Lower leg skin (tissue), 4 donors: ENCODE measurements at regions of chr16 and their contacts with region 1.

Region 1: GRCh38 chr16:89210904-89211515 is 6.5 kb upstream of the ZNF778 start:
- DNase-seq: no peak
- H3K4me3 ChIP-seq: no peak overlapping the region
- CTCF ChIP-seq: no peak
- POLR2A ChIP-seq: no peak

Region 2: GRCh38 chr16:88569985-88570690 is 640.9 kb before region 1 on chr16 and contains the start of gene ZC3H18:
- intact Hi-C with region 1: no loop called
- DNase-seq: peak; percentile 92 to 99
- H3K4me3 ChIP-seq: peak within 1 kb of the TSS; percentile 61
- CTCF ChIP-seq: no peak
- POLR2A ChIP-seq: no peak
- total RNA-seq, gene ZC3H18: 16.5 to 32.3 (median 18.5) TPM

Region 3: DNA sequence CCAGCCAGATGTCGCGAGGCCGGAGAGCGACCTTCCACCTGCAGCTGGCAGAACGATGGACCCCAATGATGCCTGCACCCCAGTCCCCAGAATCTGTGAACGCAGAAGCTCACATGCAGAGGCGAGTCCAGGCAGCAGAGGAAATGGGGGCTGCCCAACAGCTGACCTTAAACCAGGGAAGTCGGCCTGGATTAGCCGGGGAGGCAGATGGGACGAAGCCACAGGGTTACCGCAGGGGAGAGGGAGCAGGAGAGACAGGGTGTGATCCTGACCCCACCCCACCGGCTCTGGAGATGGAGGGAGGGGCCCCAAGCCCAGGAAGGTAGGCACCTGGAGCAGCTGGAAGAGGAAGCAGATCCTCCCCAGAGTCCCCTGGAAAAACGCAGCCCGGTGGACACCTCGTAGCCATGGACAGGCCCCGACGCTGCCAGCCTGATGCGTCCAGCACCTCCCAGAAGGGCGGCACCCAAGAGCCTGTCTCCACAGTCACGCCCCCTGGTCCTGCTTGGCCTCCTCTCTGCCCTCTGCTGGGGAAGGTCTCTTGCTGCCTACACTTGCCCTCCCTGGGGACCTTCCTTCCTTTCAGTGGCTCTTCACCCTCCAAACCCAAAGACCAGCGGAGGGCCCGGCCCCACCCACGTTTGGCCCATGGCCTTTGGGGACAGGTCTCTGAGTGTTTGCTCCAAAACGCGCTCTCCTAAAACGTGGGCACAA is 463.3 kb before region 1 on chr16:
- intact Hi-C with region 1: loop called (anchors 5 kb)
- DNase-seq: no peak
- H3K4me3 ChIP-seq: no peak overlapping the region
- CTCF ChIP-seq: no peak
- POLR2A ChIP-seq: no peak

Region 4: DNA sequence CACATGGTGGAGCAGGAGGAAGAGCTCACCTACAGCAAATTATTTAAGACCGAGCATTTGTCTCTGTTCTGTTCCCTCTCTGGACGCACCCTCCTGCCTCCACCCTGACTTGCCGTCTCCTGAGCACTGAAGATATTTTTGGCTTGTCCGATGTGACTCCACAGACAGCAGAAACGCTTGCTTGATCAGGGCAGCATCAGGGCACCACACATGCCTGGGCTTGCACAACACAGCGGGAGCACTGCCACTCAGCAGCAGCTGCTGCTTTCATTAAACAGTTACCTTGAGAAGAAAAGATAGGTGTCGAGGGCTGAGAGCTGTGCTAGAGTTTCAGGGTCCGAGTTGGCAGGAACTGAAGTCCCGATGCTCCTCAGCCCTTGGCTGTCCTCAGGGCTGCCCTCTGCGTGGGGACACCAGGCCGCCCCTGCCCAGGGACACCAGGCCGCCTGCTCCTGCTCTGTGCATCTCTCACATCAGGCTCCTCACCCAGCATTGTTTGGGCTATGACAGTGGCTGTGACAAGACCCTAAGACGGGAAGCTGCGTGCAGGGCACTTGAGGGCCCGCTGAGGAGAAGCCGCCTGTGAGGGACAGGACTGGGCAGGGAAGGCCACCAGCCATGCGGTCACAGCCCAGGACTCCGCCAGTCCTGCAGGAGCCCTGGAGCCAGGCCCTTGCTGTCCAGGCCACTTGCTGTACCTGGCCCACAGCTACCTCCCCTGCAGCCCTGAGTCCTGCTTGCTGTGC is 60.7 kb before region 1 on chr16:
- intact Hi-C with region 1: no loop called
- DNase-seq: no peak
- H3K4me3 ChIP-seq: no peak overlapping the region
- CTCF ChIP-seq: no peak
- POLR2A ChIP-seq: no peak